A673 (cell line): ENCODE measurements at regions of chr10 and their contacts with region 1.

Region 1: GRCh38 chr10:23994479-23995046 is 214.4 kb upstream of the KIAA1217 start:
- DNase-seq: peak; percentile 75
- H3K4me3 ChIP-seq: no peak overlapping the region
- H3K27ac ChIP-seq: no peak overlapping the region
- H3K4me1 ChIP-seq: peaks cover 11% of the 10 kb centered on the region
- H3K27me3 ChIP-seq: no peaks in the 10 kb centered on the region
- CTCF ChIP-seq: peak; percentile 94

Region 2: GRCh38 chr10:24201503-24202180 is 207.1 kb after region 1 on chr10:
- CTCF ChIA-PET with region 1: no interaction called
- POLR2A ChIA-PET with region 1: no interaction called
- intact Hi-C with region 1: loop called (anchors 1 kb)
- DNase-seq: no peak
- H3K4me3 ChIP-seq: no peak overlapping the region
- H3K27ac ChIP-seq: no peak overlapping the region
- H3K4me1 ChIP-seq: peaks cover 27% of the 10 kb centered on the region
- H3K27me3 ChIP-seq: no peaks in the 10 kb centered on the region
- CTCF ChIP-seq: no peak

Region 3: GRCh38 chr10:24360282-24361127 is 365.9 kb after region 1 on chr10:
- CTCF ChIA-PET with region 1: interaction called, 11 read pairs
- POLR2A ChIA-PET with region 1: no interaction called
- intact Hi-C with region 1: loop called (anchors 2 kb)
- DNase-seq: peak; percentile 90
- H3K4me3 ChIP-seq: no peak overlapping the region
- H3K27ac ChIP-seq: peak overlapping the region; percentile 8
- H3K4me1 ChIP-seq: peaks cover 63% of the 10 kb centered on the region
- H3K27me3 ChIP-seq: no peaks in the 10 kb centered on the region
- CTCF ChIP-seq: peak; percentile 87

Region 4: DNA sequence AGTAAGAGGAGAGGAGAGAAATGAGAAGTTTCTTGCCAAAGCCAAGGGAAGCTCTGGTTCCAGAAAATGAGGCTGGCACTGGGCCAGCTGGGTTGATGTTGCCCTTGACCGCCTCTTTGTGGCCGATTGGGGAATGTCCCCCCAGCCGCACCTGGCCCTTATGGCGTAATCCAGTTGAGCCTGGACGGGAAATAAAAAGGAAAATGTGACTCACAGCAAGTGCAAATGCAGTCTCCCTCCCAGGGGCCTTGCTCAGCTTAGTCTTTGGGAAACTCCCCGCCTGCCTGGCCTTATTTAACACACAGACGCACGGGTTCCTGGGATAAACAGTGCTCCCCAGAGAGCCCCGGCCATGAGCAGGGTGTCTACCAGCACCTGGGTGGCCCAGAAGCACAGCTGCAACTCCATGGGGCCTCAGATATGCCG is 389.1 kb after region 1 on chr10:
- CTCF ChIA-PET with region 1: interaction called, 6 read pairs
- POLR2A ChIA-PET with region 1: no interaction called
- intact Hi-C with region 1: loop called (anchors 2 kb)
- DNase-seq: peak; percentile 98
- H3K4me3 ChIP-seq: no peak overlapping the region
- H3K27ac ChIP-seq: peak overlapping the region; percentile 93
- H3K4me1 ChIP-seq: peaks cover 44% of the 10 kb centered on the region
- H3K27me3 ChIP-seq: no peaks in the 10 kb centered on the region
- CTCF ChIP-seq: peak; percentile 70

Region 5: DNA sequence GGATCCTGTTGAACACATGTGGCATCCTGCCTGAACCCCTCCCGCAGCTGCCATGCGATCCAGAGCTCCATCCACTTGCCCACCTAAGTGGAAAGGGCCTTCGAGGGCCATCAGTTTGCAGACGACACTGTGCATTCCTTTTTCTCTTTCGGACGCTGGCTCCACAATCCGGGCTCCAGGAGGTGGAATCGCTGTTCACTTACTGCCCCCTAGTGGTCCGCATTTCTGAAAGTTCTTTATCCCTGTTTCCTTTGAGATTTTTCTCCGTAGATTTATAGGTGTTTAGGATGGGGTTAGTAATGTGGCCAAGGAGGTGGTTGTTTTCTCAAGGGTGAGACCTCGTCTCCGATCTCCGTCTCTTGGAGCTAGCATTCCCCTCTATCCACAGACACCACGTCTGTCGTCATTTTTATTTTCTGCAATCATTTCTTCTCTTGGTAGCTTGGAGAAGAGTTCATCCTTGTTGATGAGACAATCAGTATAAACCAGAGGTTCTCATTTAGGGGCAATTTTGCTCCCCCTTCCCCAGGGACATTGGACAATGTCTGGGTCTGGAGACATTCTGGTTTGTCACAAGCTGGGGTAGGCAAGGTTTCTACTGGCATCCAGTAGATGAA is 524.5 kb after region 1 on chr10:
- CTCF ChIA-PET with region 1: interaction called, 3 read pairs
- POLR2A ChIA-PET with region 1: no interaction called
- intact Hi-C with region 1: loop called (anchors 2 kb)
- DNase-seq: peak; percentile 88
- H3K4me3 ChIP-seq: no peak overlapping the region
- H3K27ac ChIP-seq: peak overlapping the region; percentile 71
- H3K4me1 ChIP-seq: peaks cover 41% of the 10 kb centered on the region
- H3K27me3 ChIP-seq: no peaks in the 10 kb centered on the region
- CTCF ChIP-seq: peak; percentile 90